GM13976 (cell line): ENCODE measurements at regions of chr5 and their contacts with region 1.

Region 1: DNA sequence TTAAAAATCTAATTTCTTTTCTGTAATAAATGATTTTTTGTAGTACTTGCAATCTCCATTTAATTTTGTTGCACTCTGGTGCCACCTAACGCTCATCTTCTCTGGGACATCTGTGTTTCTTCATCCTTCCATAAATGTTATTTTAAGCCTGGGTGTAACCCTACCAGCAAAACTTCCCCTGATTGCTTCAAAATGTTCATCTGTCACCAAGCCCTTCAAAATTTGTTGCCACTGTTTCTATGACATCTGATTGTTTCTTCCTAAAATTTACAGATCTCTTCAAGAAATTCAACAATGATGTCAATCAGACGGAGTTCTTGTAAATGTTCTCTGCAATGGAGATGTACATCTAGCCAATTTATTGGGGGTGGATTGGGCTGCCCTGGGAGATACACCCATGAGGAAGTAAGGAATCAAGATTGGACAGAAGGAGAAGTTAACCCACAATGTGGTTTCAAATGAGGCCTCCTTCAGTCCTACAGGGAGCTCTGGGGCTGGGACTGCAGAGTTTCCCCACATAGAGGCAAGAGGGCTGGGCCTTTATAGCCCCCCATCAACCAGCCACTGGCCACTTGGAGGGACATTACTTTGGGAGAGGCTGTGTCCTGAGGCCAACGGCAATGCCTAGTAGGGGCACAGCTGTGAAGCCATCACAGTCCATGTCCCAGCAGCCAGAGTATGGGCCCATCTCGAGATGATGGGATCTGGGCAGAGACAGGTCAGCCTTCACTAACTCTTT is 23.3 kb downstream of the MCTP1 start:
- DNase-seq: no peak
- CTCF ChIP-seq: peak; percentile 42

Region 2: GRCh38 chr5:94968507-94969095 is 293.0 kb before region 1 on chr5:
- in situ Hi-C with region 1: loop called (anchors 5 kb)
- DNase-seq: peak; percentile 41
- CTCF ChIP-seq: peak; percentile 39

Region 3: GRCh38 chr5:95130941-95131340 is 130.7 kb before region 1 on chr5:
- in situ Hi-C with region 1: no loop called
- DNase-seq: no peak
- CTCF ChIP-seq: no peak

Region 4: GRCh38 chr5:95511606-95512005 is 250.0 kb after region 1 on chr5:
- in situ Hi-C with region 1: no loop called
- DNase-seq: no peak
- CTCF ChIP-seq: no peak

Region 5: DNA sequence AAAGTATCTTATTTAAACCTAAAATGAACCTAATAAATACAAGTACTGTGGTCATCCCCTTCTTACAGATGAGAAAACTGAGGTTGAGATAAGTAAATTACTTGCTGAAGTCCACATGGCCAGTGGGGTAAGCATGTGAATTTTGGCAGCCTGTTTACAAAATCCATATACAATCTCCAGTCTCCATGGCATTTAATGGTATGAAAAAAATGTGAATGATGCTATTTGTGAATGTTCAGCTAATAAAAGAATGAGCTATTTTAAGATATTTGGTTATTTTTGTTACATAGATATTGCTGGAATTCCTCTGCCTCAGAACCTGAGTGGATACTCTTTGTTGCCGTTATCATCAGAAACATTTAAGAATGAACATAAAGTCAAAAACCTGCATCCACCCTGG is 339.0 kb after region 1 on chr5:
- in situ Hi-C with region 1: no loop called
- DNase-seq: no peak
- CTCF ChIP-seq: no peak